ENCODE measurements at regions of chr11 and their contacts with region 1.

Region 1: GRCh38 chr11:102530558-102530957 is at the start of gene MMP7:
- DNase-seq: no peak
- H3K4me3 ChIP-seq: no peak within 1 kb of the TSS
- H3K4me3 Mint-ChIP-seq: no peak within 1 kb of the TSS
- H3K27ac Mint-ChIP-seq: no peak within 1 kb of the TSS
- H3K4me1 ChIP-seq: peaks cover 14% of the 10 kb centered on the region
- H3K4me1 Mint-ChIP-seq: peaks cover 14% of the 10 kb centered on the region
- H3K27me3 ChIP-seq: no peaks in the 10 kb centered on the region
- H3K27me3 Mint-ChIP-seq: no peaks in the 10 kb centered on the region
- CTCF ChIP-seq: no peak
- total RNA-seq, gene MMP7: 1.0 TPM in 1 of 2 replicates, not detected in the other

Region 2: DNA sequence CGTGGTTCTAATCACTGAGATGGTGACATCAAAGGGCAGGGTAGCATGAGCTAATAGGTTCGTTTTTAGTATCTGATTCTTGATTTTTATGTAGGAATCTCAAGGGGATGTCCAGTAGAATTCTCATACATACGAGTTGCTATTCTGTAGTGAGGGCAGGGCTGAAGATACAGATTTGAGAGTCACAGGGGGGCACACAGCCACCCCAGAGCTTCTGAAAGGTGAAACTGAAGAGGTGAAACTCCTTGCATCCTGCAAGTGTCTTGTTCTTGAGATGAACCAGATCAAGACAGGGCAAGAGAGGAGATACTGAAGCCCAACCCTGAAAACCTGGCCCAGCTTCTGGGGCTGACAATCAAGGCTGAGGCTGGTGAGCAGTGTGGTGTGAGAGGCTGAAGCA is 42.4 kb before region 1 on chr11:
- CTCF ChIA-PET with region 1: no interaction called
- POLR2A ChIA-PET with region 1: no interaction called
- intact Hi-C with region 1: no loop called
- DNase-seq: no peak
- H3K4me3 ChIP-seq: no peak overlapping the region
- H3K4me3 Mint-ChIP-seq: no peak overlapping the region
- H3K27ac Mint-ChIP-seq: no peak overlapping the region
- H3K4me1 ChIP-seq: peaks cover 5% of the 10 kb centered on the region
- H3K4me1 Mint-ChIP-seq: peaks cover 8% of the 10 kb centered on the region
- H3K27me3 ChIP-seq: no peaks in the 10 kb centered on the region
- H3K27me3 Mint-ChIP-seq: no peaks in the 10 kb centered on the region
- CTCF ChIP-seq: no peak

Region 3: GRCh38 chr11:102546427-102546826 is 15.9 kb after region 1 on chr11:
- CTCF ChIA-PET with region 1: no interaction called
- POLR2A ChIA-PET with region 1: interaction called, 22 read pairs
- intact Hi-C with region 1: no loop called
- DNase-seq: no peak
- H3K4me3 ChIP-seq: no peak overlapping the region
- H3K4me3 Mint-ChIP-seq: no peak overlapping the region
- H3K27ac Mint-ChIP-seq: no peak overlapping the region
- H3K4me1 ChIP-seq: peaks cover 16% of the 10 kb centered on the region
- H3K4me1 Mint-ChIP-seq: peaks cover 4% of the 10 kb centered on the region
- H3K27me3 ChIP-seq: no peaks in the 10 kb centered on the region
- H3K27me3 Mint-ChIP-seq: no peaks in the 10 kb centered on the region
- CTCF ChIP-seq: no peak

Region 4: DNA sequence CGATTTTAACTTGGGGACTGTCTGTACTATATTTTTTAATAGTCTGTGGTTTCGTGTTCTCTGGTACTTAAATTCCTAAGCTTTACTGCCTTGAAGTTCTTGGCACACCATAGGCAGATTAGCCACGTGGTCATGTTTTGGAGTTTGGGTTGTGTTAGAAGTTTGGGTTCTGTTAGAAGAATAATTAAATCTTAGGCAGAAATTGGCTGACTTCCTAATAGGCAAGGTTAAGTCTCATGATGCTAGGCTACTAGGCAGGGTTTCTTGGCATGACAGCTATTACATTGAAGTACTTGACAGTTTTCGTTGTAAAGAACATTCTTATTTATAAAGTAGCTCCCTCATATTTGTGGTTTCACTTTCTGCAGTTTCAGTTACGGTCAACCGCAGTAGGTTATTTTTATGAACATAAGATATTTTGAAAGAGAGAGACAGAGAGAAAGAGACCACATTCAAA is 30.0 kb after region 1 on chr11:
- CTCF ChIA-PET with region 1: no interaction called
- POLR2A ChIA-PET with region 1: no interaction called
- intact Hi-C with region 1: no loop called
- DNase-seq: no peak
- H3K4me3 ChIP-seq: no peak overlapping the region
- H3K4me3 Mint-ChIP-seq: no peak overlapping the region
- H3K27ac Mint-ChIP-seq: no peak overlapping the region
- H3K4me1 ChIP-seq: peaks cover 22% of the 10 kb centered on the region
- H3K4me1 Mint-ChIP-seq: no peaks in the 10 kb centered on the region
- H3K27me3 ChIP-seq: no peaks in the 10 kb centered on the region
- H3K27me3 Mint-ChIP-seq: no peaks in the 10 kb centered on the region
- CTCF ChIP-seq: no peak

Region 5: GRCh38 chr11:102630598-102631448 is 100.3 kb after region 1 on chr11:
- CTCF ChIA-PET with region 1: no interaction called
- POLR2A ChIA-PET with region 1: no interaction called
- intact Hi-C with region 1: no loop called
- DNase-seq: no peak
- H3K4me3 ChIP-seq: no peak overlapping the region
- H3K4me3 Mint-ChIP-seq: no peak overlapping the region
- H3K27ac Mint-ChIP-seq: no peak overlapping the region
- H3K4me1 ChIP-seq: no peaks in the 10 kb centered on the region
- H3K4me1 Mint-ChIP-seq: no peaks in the 10 kb centered on the region
- H3K27me3 ChIP-seq: no peaks in the 10 kb centered on the region
- H3K27me3 Mint-ChIP-seq: no peaks in the 10 kb centered on the region
- CTCF ChIP-seq: no peak

Measured in Caco-2 (cell line).